OCI-LY7 (cell line): ENCODE measurements at regions of chr9 and their contacts with region 1.

Region 1: DNA sequence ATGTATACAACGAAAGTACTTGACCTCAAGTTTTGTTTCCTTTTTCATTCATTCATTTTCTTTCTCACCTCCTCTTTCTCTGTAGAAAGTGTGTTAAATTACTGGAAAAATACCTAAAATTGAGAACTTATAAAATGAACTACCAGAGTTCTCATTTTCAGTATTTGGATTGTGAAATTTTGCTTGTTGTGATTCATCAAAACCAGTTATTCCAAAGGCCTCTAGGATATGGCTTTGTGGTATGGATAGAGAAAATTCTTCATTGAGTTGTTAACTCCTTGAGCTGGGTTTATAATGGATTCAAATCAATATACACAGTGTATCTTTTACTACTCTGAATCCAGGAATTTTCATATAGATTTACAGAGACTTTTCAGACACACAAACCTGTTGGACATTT is 287.6 kb downstream of the KDM4C start:
- DNase-seq: no peak
- H3K4me3 ChIP-seq: no peak overlapping the region
- H3K27ac ChIP-seq: no peak overlapping the region
- H3K4me1 ChIP-seq: no peaks in the 10 kb centered on the region
- CTCF ChIP-seq: no peak

Region 2: DNA sequence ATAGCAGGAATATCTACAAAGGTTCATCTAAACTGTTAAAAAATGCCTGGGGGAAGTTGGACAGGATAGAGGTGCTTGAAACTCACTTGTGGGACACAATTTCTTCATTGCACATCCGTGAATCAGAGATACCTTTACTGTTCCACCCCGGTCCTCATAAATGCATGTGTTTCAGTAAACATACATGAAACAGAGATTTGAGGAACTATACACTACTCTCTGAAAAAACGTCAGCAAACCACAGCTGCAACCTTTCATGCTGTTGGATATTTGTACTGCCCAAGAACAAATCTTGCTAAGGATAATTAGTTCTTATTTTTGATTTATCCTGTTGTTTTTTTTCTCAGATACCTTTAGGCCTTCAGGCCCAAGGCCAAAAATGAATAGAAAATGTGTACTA is 49.7 kb after region 1 on chr9:
- CTCF ChIA-PET with region 1: no interaction called
- POLR2A ChIA-PET with region 1: no interaction called
- intact Hi-C with region 1: loop called (anchors 5 kb)
- DNase-seq: peak; percentile 4
- H3K4me3 ChIP-seq: no peak overlapping the region
- H3K27ac ChIP-seq: no peak overlapping the region
- H3K4me1 ChIP-seq: no peaks in the 10 kb centered on the region
- CTCF ChIP-seq: no peak

Region 3: DNA sequence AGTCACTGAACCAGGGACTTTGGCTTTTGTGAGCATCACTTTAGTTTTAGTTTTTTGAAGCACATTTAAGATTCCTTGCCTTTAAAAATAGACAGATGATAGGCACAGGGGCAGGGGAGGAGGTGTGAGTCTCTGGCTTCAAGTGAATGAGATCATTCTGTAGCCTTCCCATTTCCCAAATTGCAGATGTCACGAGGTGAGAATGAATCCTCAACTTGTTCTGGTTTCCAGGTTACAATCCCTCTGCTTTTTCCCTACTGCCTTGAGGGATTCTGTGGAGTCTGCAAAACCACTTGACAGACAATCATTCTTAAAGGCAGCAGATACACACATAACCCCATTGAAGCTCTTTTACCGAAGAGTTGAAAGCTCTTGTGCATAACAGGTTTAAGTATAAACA is 421.8 kb after region 1 on chr9:
- CTCF ChIA-PET with region 1: no interaction called
- POLR2A ChIA-PET with region 1: no interaction called
- intact Hi-C with region 1: no loop called
- DNase-seq: no peak
- H3K4me3 ChIP-seq: no peak overlapping the region
- H3K27ac ChIP-seq: no peak overlapping the region
- H3K4me1 ChIP-seq: no peaks in the 10 kb centered on the region
- CTCF ChIP-seq: no peak

Region 4: DNA sequence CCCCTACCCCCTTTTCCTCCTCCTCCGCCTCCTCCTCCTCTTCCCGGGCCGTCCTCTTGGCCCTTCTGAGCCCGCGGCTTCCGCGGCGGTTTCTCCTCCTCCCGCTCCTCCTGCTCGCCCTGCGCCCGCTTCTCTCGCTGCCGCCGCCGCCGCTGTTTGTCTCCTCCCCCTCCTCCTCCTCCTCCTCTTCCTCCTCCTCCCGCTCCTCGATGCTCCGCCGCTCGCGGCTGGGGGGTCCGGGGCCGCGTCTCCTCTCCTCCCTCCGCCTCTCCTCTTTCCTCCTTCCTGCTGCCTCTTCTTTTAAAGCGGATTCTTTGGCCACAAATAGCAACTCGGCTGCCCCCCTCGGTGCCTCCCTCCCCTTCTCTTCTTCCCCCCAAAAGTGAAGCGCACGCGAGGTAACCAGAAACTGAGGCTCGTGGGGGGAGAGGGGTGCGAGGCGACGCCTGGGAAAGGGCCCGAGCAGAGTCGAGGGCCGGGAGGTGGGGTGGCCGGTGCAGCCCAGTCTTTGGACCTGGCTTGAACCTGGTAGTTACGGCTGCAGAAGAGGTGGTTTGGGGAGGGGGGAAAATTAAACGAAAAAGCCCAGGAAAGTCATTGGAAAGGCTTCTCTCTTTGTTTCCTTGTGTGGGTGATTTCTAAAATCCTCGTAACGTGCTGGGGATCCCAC is 1812.7 kb after region 1 on chr9:
- CTCF ChIA-PET with region 1: no interaction called
- POLR2A ChIA-PET with region 1: no interaction called
- intact Hi-C with region 1: no loop called
- DNase-seq: no peak
- H3K4me3 ChIP-seq: no peak overlapping the region
- H3K27ac ChIP-seq: no peak overlapping the region
- H3K4me1 ChIP-seq: no peaks in the 10 kb centered on the region
- CTCF ChIP-seq: no peak